ENCODE measurements at regions of chr3 and their contacts with region 1.

Region 1: GRCh38 chr3:14921078-14921616 is 26.2 kb upstream of the NR2C2 start:
- DNase-seq: peak; percentile 72
- H3K4me3 ChIP-seq: no peak overlapping the region
- H3K27ac ChIP-seq: no peak overlapping the region
- H3K27me3 ChIP-seq: peaks cover 7% of the 10 kb centered on the region
- CTCF ChIP-seq: peak; percentile 95

Region 2: DNA sequence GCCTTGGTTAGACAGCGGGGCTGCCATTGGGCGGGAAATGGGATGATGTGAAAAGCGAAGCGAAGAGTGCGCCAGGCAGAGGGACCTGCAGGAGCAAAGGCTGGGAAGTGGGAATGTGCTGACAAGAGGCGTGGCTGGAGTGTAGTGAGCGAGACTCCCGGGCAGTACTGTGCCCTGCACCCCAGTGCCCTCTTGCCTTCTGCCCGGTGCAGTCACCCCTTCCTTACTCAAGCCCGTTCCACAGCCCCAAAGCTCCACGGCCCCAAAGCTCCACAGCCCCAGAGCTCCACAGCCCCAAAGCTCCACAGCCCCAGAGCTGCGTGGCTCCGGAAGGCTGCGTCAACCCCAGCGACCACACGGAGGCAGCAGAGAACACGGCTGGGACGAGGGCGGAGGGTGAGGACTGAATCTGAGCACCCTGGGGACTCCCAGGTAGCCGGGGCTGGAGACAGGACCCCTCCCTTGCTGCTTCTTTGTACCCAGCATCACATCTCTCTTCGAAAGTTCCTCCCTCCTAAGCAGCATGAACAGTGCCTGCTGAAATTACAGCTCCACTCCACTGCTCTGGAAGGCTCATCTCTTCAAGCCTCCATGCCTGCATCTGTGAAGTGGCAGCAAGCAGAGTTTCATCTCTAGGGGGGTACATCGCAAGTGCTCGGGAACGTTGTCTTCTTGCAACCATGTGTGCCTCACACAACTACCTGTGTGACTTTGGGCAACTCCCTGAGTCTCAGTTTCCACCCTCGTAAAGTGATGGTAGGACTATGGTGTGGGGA is 1263.3 kb before region 1 on chr3:
- CTCF ChIA-PET with region 1: interaction called, 10 read pairs
- POLR2A ChIA-PET with region 1: no interaction called
- DNase-seq: no peak
- H3K4me3 ChIP-seq: 0 out of 2 replicates have a peak overlapping the region, but pooled peaks have one; percentile 20
- H3K27ac ChIP-seq: no peak overlapping the region
- H3K27me3 ChIP-seq: peaks cover 10% of the 10 kb centered on the region
- CTCF ChIP-seq: peak; percentile 86

Region 3: GRCh38 chr3:14525685-14526631 is 395.2 kb before region 1 on chr3:
- CTCF ChIA-PET with region 1: no interaction called
- POLR2A ChIA-PET with region 1: no interaction called
- DNase-seq: no peak
- H3K4me3 ChIP-seq: no peak overlapping the region
- H3K27ac ChIP-seq: no peak overlapping the region
- H3K27me3 ChIP-seq: peaks cover 21% of the 10 kb centered on the region
- CTCF ChIP-seq: no peak

Region 4: DNA sequence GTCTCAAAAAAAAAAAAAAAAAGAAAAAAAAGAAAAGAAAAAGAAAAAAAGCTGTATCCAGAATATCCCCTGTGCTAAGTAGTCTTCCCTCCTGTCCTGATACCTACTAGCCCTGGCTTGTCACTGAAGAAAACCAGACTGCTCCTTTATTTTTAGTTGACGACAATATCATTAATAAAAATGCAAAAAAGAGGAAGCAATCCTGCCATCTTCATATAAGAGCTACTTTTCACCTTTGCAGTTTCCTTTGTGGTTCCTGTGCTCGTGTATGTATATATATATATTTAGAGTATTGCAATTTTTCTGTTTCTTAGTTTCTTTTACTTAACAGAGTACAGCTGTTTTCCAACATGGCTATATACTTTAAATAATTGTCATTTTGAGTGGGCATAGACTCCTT is 232.6 kb before region 1 on chr3:
- CTCF ChIA-PET with region 1: interaction called, 14 read pairs
- POLR2A ChIA-PET with region 1: no interaction called
- DNase-seq: no peak
- H3K4me3 ChIP-seq: no peak overlapping the region
- H3K27ac ChIP-seq: no peak overlapping the region
- H3K27me3 ChIP-seq: peaks cover 2% of the 10 kb centered on the region
- CTCF ChIP-seq: no peak

Region 5: DNA sequence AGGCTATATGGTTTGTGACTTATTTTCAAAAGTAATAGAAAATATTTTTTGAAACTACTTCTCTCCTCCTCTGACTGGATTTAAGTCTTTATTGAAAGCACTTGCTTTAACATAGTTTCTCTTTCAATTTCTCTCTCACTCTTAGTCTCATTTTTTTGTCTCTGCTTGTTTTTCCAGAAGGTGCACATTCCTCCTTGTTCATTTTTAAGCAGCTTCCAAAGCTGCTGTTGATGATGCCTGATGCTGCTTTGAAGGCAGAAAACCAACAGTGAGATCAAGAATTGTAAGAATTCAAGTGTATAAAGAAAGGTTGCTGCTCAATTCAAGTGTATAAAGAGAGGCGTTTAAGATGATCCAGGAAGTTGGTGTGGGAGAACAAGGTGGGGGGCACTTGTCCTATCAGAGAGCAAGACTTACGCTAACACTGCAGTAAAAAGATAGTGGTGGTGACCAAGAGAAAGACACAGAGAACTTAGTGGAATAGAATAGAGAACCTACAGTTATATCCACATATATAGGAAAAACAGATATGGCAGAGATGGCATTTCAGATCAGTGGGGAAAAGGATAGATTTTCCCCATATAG is 38.3 kb after region 1 on chr3:
- CTCF ChIA-PET with region 1: no interaction called
- POLR2A ChIA-PET with region 1: no interaction called
- DNase-seq: no peak
- H3K4me3 ChIP-seq: no peak overlapping the region
- H3K27ac ChIP-seq: no peak overlapping the region
- H3K27me3 ChIP-seq: no peaks in the 10 kb centered on the region
- CTCF ChIP-seq: no peak

Region 6: DNA sequence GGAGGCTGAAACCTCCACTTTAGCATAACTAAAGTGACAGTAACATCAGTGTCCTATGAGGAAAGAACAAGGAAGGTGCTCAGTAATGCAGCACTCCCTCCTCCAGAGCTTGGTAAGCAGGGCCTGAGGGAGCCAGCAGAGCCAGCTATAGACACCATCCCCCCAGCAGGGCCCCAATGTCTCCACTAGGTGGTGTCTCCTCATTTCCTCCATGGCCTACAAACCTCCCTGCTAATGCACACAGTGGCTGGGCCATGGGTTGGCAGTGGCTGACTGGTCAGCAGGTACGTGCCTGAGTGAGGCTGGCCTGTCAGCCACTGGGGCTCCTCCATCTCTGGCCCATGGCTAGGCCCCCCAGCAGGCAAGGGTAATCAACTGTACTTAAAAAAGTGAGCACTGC is 130.4 kb after region 1 on chr3:
- CTCF ChIA-PET with region 1: interaction called, 11 read pairs
- POLR2A ChIA-PET with region 1: no interaction called
- DNase-seq: no peak
- H3K4me3 ChIP-seq: no peak overlapping the region
- H3K27ac ChIP-seq: peak overlapping the region; percentile 11
- H3K27me3 ChIP-seq: no peaks in the 10 kb centered on the region
- CTCF ChIP-seq: peak; percentile 66

Region 7: DNA sequence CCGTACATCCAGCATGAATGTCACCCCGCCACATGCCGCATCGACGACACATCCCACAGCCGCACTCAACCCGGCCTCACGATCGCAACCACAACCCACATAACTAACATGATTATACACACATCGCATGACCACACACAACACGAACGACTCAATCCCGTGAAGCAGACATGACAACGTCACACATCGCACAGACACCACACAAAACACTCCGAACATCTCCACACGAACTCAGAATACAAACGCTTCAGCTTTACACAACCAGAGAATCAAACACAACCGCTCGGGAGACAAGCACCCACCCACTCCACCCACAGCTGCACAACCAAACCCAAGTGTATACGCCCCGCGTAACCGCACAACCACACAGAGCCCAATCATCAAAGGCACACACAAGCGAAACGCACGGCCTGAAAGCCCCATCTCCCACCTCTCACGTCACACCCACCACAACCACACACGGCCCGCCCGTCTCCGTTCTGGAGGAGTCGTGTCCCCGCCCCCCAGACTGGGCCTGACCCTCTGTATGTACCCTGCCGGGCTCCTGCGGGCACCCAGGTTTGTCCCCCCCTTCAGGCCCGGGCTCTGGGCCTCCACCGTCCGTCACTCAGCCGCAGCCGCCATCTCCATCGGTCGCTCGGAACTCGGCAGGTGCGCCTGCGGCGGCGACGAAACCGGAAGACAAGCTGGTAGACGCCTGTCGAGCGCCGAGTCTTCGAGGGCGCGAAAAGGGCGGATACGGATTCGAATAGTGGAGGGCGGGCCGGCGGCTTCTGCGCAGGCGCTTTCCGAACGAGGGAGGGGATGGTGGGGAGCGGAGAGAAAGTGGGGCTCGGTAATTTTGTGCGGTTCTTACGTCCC is 177.6 kb after region 1 on chr3 and contains the start of gene RBSN:
- CTCF ChIA-PET with region 1: interaction called, 3 read pairs
- POLR2A ChIA-PET with region 1: interaction called, 10 read pairs
- DNase-seq: peak; percentile 83
- H3K4me3 ChIP-seq: peak within 1 kb of the TSS; percentile 97
- H3K27ac ChIP-seq: peak within 1 kb of the TSS; percentile 77
- H3K27me3 ChIP-seq: no peaks in the 10 kb centered on the region
- CTCF ChIP-seq: no peak
- polyA plus RNA-seq, gene RBSN: 13.2 and 14.3 TPM in 2 replicates

Measured in AG04450 (cell line).